CD8-positive, alpha-beta memory T cell (primary cell): ENCODE measurements at regions of chr1 and their contacts with region 1.

Region 1: DNA sequence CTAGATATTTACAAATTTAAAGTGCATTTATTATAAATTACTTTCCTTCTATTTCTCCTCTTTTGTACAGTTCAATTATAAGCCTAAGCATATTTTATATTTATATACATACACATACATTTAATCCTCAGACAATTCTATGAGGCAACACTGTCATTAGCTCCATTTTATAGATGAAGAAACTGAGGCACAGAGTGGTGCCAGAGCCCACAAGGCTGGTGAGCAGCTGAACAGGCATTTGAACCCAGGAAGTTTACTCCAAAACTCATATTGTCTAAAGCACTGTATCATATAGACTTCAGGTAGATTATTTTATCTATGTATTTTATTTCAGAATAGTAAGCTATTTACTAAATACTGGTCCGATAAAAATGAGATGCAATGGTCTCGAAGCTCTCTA is 52.3 kb downstream of the PTP4A2 start:
- DNase-seq: no peak
- H3K4me3 ChIP-seq: no peak overlapping the region
- H3K4me3 Mint-ChIP-seq: no peak overlapping the region
- H3K27ac ChIP-seq: no peak overlapping the region
- H3K27ac Mint-ChIP-seq: peak overlapping the region in 1 of 8 donors; percentile 16
- H3K4me1 ChIP-seq: peaks cover 21% of the 10 kb centered on the region
- H3K4me1 Mint-ChIP-seq: peaks cover 18 to 30% (median 26%) of the 10 kb centered on the region in 3 donors
- H3K27me3 ChIP-seq: no peaks in the 10 kb centered on the region
- H3K27me3 Mint-ChIP-seq: peaks cover 0 to 1% of the 10 kb centered on the region in 2 donors

Region 2: DNA sequence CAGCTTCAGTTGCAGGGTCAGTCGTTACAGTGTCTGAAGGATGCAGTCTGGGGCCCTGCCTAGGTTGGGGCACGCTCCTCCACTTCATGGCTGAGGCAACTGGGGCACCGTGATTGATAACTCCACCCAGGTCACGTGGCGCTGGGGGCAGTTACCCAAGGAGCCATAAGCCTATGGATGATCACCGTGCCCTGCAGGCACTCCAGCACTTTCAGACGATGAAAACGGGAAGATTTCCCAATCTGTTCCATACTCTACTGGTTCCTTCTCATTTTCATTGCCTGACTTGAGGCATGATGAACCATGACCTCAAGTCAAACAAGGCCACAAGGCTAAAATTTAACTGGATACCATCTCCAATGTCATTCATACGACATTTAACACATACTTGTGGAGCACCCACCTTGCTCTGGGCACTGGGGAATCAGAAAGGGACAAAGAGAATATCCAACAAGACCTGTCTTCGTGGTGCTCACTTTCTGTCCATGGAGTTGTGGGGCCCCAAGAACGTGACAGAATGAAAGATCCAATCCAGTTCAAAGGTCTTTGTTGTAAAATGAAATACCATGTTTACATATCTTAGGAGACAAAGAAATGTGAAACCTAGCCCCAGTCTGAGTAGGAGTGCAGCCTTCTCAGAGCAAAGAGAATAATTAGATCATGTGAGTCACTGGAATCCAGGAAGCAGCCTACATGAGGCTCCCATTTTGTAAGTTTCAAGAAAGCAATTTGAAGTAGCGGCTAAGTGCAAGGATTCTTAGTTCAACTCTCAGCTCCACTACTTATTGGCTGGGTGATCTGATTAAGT is 30.6 kb before region 1 on chr1:
- CTCF ChIA-PET with region 1: no interaction called
- POLR2A ChIA-PET with region 1: interaction called, 11 read pairs
- DNase-seq: no peak
- H3K4me3 ChIP-seq: no peak overlapping the region
- H3K4me3 Mint-ChIP-seq: no peak overlapping the region
- H3K27ac ChIP-seq: no peak overlapping the region
- H3K27ac Mint-ChIP-seq: no peak overlapping the region
- H3K4me1 ChIP-seq: no peaks in the 10 kb centered on the region
- H3K4me1 Mint-ChIP-seq: peaks cover under 1 to 3% (median 3%) of the 10 kb centered on the region in 3 donors
- H3K27me3 ChIP-seq: no peaks in the 10 kb centered on the region
- H3K27me3 Mint-ChIP-seq: no peaks in the 10 kb centered on the region